Activated naive CD4-positive, alpha-beta T cell treated with anti-CD3 and anti-CD28 coated beads, Interleukin-2, amount 10 ng/mL, durations not matched to agents 7 days and 5 days (primary cell): ENCODE measurements at regions of chr1 and their contacts with region 1.

Region 1: GRCh38 chr1:25037174-25038074 is 107.3 kb upstream of the RUNX3 start:
- DNase-seq: peak; percentile 78
- H3K4me3 Mint-ChIP-seq: no peak overlapping the region
- H3K27ac Mint-ChIP-seq: peak overlapping the region; percentile 1
- H3K4me1 Mint-ChIP-seq: peaks cover 37% of the 10 kb centered on the region
- H3K27me3 Mint-ChIP-seq: peaks cover 32% of the 10 kb centered on the region

Region 2: DNA sequence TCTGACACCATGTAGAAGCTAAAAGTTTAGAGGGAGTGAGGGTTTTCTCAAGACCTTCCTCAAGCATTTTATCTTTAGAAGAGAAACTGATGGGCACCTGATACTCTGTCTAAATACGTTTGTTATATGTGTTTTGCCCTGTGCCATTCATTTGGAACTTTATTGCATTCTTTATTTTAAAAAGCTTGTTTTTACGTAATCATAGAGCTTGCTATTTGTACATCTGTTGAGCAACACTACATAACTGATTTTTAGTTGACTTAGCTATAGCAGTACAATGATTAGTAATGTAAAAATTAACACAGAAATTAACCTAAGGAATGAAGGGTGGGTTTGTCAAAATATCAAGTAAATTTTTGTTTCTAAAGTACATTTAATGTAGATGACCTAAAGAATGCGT is 195.8 kb before region 1 on chr1:
- CTCF ChIA-PET with region 1: no interaction called
- DNase-seq: no peak
- H3K4me3 Mint-ChIP-seq: no peak overlapping the region
- H3K27ac Mint-ChIP-seq: no peak overlapping the region
- H3K4me1 Mint-ChIP-seq: no peaks in the 10 kb centered on the region
- H3K27me3 Mint-ChIP-seq: peaks cover 22% of the 10 kb centered on the region

Region 3: DNA sequence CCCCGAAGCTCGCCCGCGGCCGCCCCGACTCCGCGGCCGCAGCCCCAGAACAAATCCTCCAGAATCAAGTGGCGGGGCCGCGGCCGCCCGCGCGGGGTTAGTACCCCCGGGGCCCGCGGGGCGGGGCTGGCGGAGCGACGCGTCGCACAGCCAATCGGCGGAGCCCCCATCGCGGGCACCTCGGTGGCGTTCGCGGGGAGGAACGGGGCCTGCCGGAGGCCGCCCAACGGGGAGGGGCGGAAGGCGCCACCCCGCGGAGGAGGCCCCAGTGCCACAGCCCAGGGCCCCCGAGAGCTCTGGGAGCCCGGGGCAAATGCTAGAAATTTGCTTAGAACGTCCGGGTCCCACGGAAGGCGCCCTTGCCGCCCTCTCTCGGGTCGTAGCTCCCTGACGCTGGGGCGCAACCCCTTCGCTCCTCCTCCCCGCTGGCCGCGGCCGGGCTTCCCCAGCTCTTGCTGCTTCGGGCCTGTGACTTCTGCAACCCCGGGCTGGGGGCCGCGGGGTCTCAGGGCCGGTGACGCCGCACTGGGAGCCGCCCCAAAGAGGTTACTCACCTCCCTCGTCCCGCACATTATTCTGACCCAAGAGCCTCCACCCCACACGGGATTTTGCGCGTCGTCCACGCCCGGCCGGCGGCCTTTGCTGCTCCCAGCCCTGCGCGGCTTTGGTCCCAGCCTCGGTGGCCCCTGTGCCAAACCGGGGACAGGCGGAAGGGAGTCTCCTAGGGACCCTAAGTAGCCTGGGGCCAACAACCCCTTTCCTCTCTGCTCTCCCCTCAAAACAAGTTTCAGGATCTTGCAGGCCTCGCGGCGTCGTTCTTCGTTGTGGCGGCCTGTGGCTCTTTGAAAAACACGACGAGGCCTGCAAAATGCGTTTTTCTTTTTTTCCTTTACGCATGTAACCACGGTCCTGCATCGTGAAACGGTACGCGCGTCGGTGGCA is 106.9 kb before region 1 on chr1 and contains the start of gene RUNX3:
- CTCF ChIA-PET with region 1: interaction called, 114 read pairs
- DNase-seq: peak; percentile 93
- H3K4me3 Mint-ChIP-seq: peak within 1 kb of the TSS; percentile 93
- H3K27ac Mint-ChIP-seq: peak within 1 kb of the TSS; percentile 93
- H3K4me1 Mint-ChIP-seq: peaks cover 68% of the 10 kb centered on the region
- H3K27me3 Mint-ChIP-seq: no peaks in the 10 kb centered on the region

Region 4: DNA sequence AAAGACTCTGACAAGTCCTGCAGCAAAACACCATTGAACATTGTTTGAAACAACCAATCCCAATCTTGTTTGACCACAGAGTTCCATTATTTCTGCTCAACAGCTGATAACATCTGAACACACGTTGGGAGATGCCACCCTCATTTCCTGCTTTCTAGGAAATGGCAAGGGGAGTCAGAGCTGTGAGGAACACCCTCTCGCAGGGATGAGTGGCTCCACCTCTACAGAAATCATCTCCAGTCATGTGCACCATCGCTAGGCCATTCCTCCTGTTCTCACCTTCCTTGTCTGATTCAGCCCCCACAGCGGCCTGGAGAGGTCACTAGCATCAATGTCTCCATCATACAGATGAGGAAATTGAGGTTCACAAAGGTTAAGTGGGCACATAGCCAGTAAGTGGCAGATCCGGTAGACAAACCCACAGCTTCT is 85.0 kb before region 1 on chr1:
- CTCF ChIA-PET with region 1: interaction called, 21 read pairs
- DNase-seq: peak; percentile 52
- H3K4me3 Mint-ChIP-seq: peak overlapping the region; percentile 42
- H3K27ac Mint-ChIP-seq: peak overlapping the region; percentile 83
- H3K4me1 Mint-ChIP-seq: peaks cover 96% of the 10 kb centered on the region
- H3K27me3 Mint-ChIP-seq: no peaks in the 10 kb centered on the region

Region 5: GRCh38 chr1:24987875-24988557 is 49.4 kb before region 1 on chr1:
- CTCF ChIA-PET with region 1: interaction called, 17 read pairs
- DNase-seq: peak; percentile 42
- H3K4me3 Mint-ChIP-seq: no peak overlapping the region
- H3K27ac Mint-ChIP-seq: peak overlapping the region; percentile 56
- H3K4me1 Mint-ChIP-seq: peaks cover 99% of the 10 kb centered on the region
- H3K27me3 Mint-ChIP-seq: no peaks in the 10 kb centered on the region

Region 6: GRCh38 chr1:25022361-25023189 is 14.8 kb before region 1 on chr1:
- CTCF ChIA-PET with region 1: interaction called, 45 read pairs
- DNase-seq: peak; percentile 98
- H3K4me3 Mint-ChIP-seq: peak overlapping the region; percentile 70
- H3K27ac Mint-ChIP-seq: peak overlapping the region; percentile 99
- H3K4me1 Mint-ChIP-seq: peaks cover 97% of the 10 kb centered on the region
- H3K27me3 Mint-ChIP-seq: no peaks in the 10 kb centered on the region

Region 7: DNA sequence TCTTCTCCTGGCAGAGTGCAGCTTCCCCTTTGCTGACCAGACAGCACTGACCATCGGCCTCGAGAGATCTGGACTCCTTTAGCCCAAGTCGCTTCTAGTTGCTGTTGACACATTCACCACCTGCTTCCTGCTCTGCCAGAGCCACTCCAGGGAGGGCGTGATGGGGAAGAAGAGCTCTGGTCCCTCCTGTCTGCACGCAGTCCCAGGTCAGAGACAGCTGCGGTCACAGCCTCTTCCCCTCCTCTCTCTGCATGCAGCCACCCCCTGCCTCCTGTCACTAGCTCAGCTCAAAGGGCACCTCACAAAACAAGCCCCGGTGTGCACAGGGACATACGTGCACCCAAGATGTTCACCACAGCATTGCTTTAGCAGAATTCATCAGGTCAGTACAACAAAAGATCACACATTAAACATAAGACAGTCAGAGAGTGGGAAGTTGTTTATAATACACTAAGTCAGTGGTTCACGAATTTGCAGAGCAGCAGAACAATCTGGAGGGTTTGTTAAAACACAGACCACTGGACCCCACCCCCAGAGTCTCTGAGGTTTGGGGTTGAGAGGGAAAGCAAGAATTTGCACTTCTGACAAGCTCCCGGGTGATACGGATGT is 62.0 kb after region 1 on chr1:
- CTCF ChIA-PET with region 1: interaction called, 57 read pairs
- DNase-seq: peak; percentile 58
- H3K4me3 Mint-ChIP-seq: peak overlapping the region; percentile 23
- H3K27ac Mint-ChIP-seq: peak overlapping the region; percentile 80
- H3K4me1 Mint-ChIP-seq: peaks cover 73% of the 10 kb centered on the region
- H3K27me3 Mint-ChIP-seq: peaks cover 40% of the 10 kb centered on the region